Prostate gland (tissue), 2 donors: ENCODE measurements at regions of chr15 and their contacts with region 1.

Region 1: DNA sequence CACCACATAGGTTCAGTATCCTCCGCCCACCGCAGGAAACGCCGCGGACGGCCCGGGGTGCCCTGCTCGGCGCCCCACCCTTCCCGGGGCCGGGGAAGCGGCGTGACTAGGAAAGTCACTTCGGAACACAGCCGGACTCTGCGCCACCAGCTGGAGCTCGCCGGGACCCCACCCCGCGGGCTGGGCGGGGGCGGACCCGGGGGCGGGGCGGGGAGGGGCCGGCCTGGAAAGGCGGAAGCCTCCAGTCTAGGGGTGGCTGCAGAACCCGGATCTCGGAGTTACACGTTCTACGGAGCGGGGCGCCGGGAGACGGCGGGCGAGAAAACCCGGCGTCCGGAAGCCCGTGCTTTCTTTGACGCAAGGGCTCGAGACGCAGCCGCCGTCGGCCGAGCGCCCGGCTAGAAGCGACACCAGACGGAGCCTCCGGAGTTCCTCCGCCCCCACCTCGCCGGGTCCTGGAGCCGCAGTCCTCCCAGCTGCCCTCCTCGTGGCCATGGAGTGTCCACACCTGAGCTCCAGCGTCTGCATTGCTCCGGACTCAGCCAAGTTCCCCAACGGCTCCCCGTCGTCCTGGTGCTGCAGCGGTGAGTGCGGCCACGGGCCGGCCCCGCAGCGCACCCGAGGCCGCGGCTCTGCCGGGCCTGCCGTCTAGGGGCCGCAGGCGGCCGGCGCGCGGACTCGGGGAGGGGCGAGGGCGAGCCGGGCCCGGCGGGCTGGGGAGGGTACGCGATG is at the start of gene USP3:
- DNase-seq: peak; percentile 93
- H3K4me3 ChIP-seq: peak within 1 kb of the TSS; percentile 79 to 91
- H3K27ac ChIP-seq: peak within 1 kb of the TSS; percentile 91 to 99
- H3K4me1 ChIP-seq: peaks cover 22% of the 10 kb centered on the region
- H3K27me3 ChIP-seq: no peaks in the 10 kb centered on the region
- CTCF ChIP-seq: peak; percentile 38 to 74 (median 44)
- POLR2A ChIP-seq: peak; percentile 75
- total RNA-seq, gene USP3: 44.2 to 45.8 TPM

Region 2: DNA sequence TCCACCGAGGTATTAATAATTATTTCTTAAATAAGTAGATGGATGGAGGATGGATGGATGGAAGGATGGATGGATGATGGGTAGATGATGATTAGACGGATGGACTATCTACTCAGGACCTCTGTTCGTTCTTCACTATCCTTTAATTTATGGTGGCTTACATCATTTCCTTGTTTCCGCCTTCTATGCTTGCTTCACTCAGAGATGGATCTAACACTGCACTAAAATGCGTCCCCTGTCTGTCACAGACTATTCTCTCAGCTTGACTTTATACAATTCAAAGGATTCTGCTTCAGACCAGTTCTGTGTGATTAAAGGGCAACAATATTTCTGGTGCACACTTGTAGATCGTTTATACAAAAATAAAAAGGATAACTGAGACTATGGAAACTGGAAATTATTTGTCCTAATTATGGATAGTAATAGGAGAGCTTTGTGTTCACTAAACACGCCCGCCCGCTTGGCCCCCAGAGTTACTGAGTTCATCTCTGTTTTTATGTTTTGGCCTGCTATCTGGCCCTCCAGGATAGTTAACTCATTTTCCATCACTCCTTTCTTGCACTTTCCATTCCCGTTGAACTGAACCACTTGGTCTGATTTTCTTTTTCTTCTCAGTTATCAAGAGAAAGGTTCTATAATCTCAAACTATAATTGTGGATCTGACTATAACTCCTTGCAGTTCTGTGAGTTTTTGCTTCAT is 81.4 kb before region 1 on chr15:
- intact Hi-C with region 1: no loop called
- DNase-seq: no peak
- H3K4me3 ChIP-seq: no peak overlapping the region
- H3K27ac ChIP-seq: no peak overlapping the region
- H3K4me1 ChIP-seq: no peaks in the 10 kb centered on the region
- H3K27me3 ChIP-seq: no peaks in the 10 kb centered on the region
- CTCF ChIP-seq: no peak
- POLR2A ChIP-seq: no peak

Region 3: DNA sequence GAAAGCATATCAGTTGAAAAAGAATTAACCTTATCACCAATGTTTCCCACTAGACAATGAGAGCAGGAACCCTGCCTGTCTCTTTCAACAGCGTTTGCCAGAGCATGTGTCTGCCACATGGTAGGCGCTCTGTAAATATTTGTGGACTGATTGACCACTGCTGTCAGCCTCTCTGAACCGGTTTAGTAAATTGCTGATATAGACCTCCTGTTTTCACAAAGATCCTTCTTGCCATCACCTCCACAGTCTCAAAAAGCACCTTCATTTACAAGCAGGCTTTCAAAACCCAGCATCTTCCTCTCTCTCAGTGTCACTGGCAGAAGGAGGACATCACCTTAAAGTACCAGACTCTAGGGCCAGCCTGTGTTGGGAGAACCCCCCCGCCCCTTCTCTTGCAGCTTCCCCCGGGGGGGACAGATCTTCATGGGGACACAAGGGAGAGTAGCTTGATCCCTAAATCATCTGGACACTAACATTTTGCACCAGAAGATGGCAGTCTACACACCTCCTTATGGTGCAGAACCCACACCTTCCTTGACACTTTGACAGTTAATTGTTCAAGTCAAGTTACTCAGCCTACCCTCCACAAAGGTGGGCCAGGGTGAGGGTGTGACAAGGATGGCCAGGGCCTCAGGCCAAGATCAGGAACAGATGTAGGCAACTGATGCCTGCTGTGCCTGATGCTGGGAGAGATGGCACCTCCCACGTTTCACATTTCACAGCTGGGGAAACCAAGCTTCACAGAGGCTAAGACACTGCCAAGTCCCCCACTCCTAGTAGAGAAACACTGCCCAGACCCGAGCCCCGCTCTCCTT is 37.8 kb before region 1 on chr15:
- intact Hi-C with region 1: loop called (anchors 5 kb)
- DNase-seq: peak; percentile 68
- H3K4me3 ChIP-seq: no peak overlapping the region
- H3K27ac ChIP-seq: peak overlapping the region; percentile 47 to 73
- H3K4me1 ChIP-seq: peaks cover 9% of the 10 kb centered on the region
- H3K27me3 ChIP-seq: no peaks in the 10 kb centered on the region
- CTCF ChIP-seq: peak; percentile 15 to 73 (median 50)
- POLR2A ChIP-seq: no peak

Region 4: DNA sequence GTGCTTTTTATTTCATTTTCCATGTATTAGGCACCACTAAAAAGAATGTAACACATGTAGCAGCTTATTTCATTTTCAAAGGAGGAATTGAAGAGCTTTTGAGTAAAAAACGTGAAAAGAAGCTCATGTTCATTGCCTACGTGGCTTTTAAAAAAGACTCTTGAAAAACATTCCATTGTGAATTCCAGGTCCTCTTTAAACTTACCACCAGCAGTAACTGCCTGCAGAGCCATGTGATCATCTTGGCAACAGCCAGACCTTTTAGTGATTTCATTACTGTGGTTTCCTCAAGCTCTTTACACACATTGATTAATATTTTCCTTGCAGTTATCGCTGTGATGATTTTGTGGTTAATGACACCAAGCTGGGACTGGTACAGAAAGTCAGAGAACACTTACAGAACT is 49.0 kb after region 1 on chr15:
- intact Hi-C with region 1: loop called (anchors 5 kb)
- DNase-seq: peak; percentile 56
- H3K4me3 ChIP-seq: no peak overlapping the region
- H3K27ac ChIP-seq: peak overlapping the region; percentile 46 to 49
- H3K4me1 ChIP-seq: peaks cover 7% of the 10 kb centered on the region
- H3K27me3 ChIP-seq: no peaks in the 10 kb centered on the region
- CTCF ChIP-seq: no peak
- POLR2A ChIP-seq: no peak

Region 5: DNA sequence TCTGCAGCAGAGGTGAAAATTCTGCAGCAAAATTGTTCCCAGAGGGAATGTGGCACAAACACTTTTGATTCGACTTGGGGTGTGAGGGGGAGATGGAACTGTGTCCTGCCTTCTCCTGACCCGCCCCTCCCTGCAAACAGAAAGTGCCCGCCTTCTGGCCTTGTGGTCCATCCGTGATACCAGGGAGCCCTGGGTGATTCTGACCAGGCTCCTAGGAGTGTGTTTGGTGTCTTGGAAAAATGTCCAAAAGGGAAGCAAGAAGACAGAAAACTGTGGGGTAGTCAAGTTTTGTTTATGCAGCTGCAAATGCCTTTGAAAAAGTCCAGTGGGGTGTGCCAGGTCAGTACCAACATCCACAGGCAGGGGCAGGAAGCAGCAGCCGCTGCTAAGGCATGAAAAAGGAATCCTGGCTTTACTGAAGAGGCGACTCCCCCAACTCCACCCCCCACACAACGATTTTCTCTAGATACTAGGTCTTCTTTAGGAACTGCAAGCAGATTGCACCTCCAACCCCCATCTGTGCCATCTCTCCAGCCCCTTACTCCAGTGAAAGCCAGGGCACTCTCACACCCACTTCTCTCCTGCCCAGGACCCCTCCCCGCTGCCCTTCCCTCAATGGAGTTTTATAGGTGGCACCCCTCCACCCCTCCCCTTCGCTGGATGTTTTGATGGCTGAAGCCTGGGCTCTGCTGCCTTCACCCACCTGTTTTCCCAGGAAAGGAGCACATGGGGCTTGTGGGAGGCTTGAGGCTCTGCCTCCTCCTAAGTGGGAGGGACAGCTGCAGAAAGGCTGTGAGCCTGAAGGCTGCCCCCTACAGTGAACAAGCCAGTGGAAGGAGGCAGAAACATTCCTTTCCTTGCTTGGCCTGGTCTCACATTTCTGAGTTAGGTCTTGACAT is 411.7 kb after region 1 on chr15:
- intact Hi-C with region 1: no loop called
- DNase-seq: no peak
- H3K4me3 ChIP-seq: no peak overlapping the region
- H3K27ac ChIP-seq: no peak overlapping the region
- H3K4me1 ChIP-seq: no peaks in the 10 kb centered on the region
- H3K27me3 ChIP-seq: no peaks in the 10 kb centered on the region
- CTCF ChIP-seq: peak in 2 of 4 experiments; percentile 13 to 35
- POLR2A ChIP-seq: no peak